Naive thymus-derived CD8-positive, alpha-beta T cell (primary cell): ENCODE measurements at regions of chr15 and their contacts with region 1.

Region 1: DNA sequence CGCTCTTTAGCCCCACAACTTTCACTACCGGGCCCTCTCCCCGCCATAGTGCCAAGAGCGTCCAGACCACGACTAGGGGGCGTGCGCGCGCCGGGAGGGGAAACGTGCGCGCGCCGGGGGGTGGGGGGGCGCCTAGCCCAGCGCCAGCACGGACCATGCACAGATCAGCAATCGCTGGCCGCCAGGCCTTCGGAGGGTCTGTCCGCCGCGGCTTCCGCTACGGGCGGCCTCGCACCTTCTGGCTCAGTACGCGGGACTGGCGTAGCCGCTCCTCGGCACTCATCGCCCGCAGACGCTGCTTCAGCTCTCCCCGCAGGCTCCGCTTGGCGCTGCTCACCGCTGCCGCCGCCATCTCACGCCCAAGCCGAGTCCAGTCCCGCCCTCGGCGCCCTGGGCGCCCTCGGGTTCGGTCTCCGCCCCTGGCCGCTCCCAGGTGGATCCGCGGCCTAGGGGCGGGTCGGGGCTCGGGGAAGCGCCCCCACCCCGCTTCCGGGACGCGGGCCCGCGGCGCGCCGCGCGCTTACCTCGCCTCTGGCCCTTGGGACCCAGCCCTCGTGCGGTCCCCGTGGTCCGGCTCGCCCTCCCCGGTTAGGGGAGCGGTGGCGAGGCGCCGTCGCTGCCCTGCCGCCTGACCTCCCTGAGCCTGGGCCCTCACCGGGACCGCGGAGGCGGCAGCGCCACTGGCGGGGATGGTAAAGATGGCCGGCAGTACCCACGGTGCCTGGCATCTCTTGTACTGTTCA is at the start of gene MTHFS:
- DNase-seq: peak; percentile 70 to 90 (median 77)
- ATAC-seq: peak; percentile 87 to 88
- H3K4me3 Mint-ChIP-seq: peak within 1 kb of the TSS; percentile 85 to 100 (median 98)
- H3K27ac Mint-ChIP-seq: peak within 1 kb of the TSS; percentile 99 to 100 (median 100)
- H3K4me1 Mint-ChIP-seq: peaks cover 23 to 46% (median 35%) of the 10 kb centered on the region in 4 donors
- H3K27me3 Mint-ChIP-seq: no peaks in the 10 kb centered on the region
- polyA plus RNA-seq, gene MTHFS: 82.6 to 106 (median 85.4) TPM

Region 2: GRCh38 chr15:79860661-79861060 is 36.1 kb before region 1 on chr15:
- POLR2A ChIA-PET with region 1: no interaction called
- DNase-seq: no peak
- ATAC-seq: no peak
- H3K4me3 Mint-ChIP-seq: no peak overlapping the region
- H3K27ac Mint-ChIP-seq: peak overlapping the region in 1 of 10 donors; percentile 22
- H3K4me1 Mint-ChIP-seq: peaks cover 10 to 34% (median 22%) of the 10 kb centered on the region in 4 donors
- H3K27me3 Mint-ChIP-seq: no peaks in the 10 kb centered on the region

Region 3: GRCh38 chr15:79970624-79971434 is 74.0 kb after region 1 on chr15 and contains the start of gene BCL2A1:
- POLR2A ChIA-PET with region 1: interaction called, 31 read pairs
- DNase-seq: peak; percentile 11 to 80 (median 56)
- ATAC-seq: peak; percentile 73 to 90
- H3K4me3 Mint-ChIP-seq: peak within 1 kb of the TSS; percentile 87 to 97 (median 93)
- H3K27ac Mint-ChIP-seq: peak within 1 kb of the TSS; percentile 94 to 97 (median 95)
- H3K4me1 Mint-ChIP-seq: peaks cover 26 to 58% (median 54%) of the 10 kb centered on the region in 4 donors
- H3K27me3 Mint-ChIP-seq: no peaks in the 10 kb centered on the region
- polyA plus RNA-seq, gene BCL2A1: 19.6 to 27.4 (median 25.9) TPM

Region 4: DNA sequence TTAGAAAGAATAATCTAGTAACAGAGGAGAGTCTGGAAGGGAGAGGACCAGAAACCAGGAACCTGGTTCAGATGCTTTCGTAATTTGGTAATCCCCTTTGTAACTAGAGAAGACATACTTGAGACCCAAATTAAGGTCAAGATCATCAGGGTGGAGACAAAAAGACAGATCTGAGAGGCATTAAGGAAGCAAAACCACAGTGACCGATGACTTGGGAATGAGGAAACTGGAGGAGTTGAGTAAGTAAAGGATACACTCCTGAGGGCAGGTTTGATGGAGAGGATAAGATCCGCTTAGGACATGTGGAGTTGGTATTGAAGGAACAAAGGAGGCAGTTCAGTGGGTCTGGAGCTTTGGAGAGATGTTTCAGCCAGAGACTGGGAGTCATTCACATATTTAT is 97.8 kb after region 1 on chr15:
- POLR2A ChIA-PET with region 1: interaction called, 18 read pairs
- DNase-seq: no peak
- ATAC-seq: no peak
- H3K4me3 Mint-ChIP-seq: no peak overlapping the region
- H3K27ac Mint-ChIP-seq: no peak overlapping the region
- H3K4me1 Mint-ChIP-seq: peaks cover 0 to 8% (median 3%) of the 10 kb centered on the region in 4 donors
- H3K27me3 Mint-ChIP-seq: peaks cover 0 to 6% (median 0%) of the 10 kb centered on the region in 5 donors

Region 5: DNA sequence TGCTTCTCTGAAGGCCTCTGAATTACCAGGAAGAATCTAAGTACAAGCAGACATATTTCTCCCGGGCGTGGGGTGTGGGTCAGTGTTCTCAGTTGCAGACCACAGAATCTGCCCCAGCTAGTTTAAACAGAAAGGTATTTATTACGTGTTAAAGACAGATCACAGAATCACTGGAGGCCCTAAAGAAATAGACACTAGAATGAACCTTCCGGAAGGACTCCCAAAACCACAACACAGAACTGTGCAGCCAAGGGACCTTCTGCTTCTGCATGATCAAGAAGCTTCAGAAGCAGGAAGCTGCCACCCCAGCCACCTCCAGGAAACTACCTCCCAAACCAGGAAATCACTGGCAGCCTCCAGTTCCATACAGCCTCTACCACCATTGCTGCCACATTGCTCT is 129.9 kb after region 1 on chr15:
- POLR2A ChIA-PET with region 1: no interaction called
- DNase-seq: no peak
- ATAC-seq: no peak
- H3K4me3 Mint-ChIP-seq: no peak overlapping the region
- H3K27ac Mint-ChIP-seq: no peak overlapping the region
- H3K4me1 Mint-ChIP-seq: peaks cover 2 to 13% (median 3%) of the 10 kb centered on the region in 4 donors
- H3K27me3 Mint-ChIP-seq: peaks cover 0 to 9% (median 3%) of the 10 kb centered on the region in 5 donors